Activated naive CD4-positive, alpha-beta T cell treated with anti-CD3 and anti-CD28 coated beads for 36 hours (primary cell): ENCODE measurements at regions of chr15 and their contacts with region 1.

Region 1: GRCh38 chr15:40893733-40894688 is at the start of gene VPS18:
- DNase-seq: peak; percentile 99
- H3K4me3 Mint-ChIP-seq: peak within 1 kb of the TSS; percentile 97
- H3K27ac Mint-ChIP-seq: peak within 1 kb of the TSS; percentile 79
- H3K4me1 Mint-ChIP-seq: peaks cover 28% of the 10 kb centered on the region
- H3K27me3 Mint-ChIP-seq: no peaks in the 10 kb centered on the region
- total RNA-seq, gene VPS18: 3.3 to 3.4 TPM

Region 2: GRCh38 chr15:40513609-40514008 is 380.4 kb before region 1 on chr15:
- CTCF ChIA-PET with region 1: no interaction called
- intact Hi-C with region 1: loop called (anchors 2 kb)
- DNase-seq: no peak
- H3K4me3 Mint-ChIP-seq: no peak overlapping the region
- H3K27ac Mint-ChIP-seq: no peak overlapping the region
- H3K4me1 Mint-ChIP-seq: peaks cover 7% of the 10 kb centered on the region
- H3K27me3 Mint-ChIP-seq: peaks cover 38% of the 10 kb centered on the region

Region 3: GRCh38 chr15:40684381-40684780 is 209.6 kb before region 1 on chr15:
- CTCF ChIA-PET with region 1: interaction called, 3 read pairs
- intact Hi-C with region 1: loop called (anchors 1 kb)
- DNase-seq: no peak
- H3K4me3 Mint-ChIP-seq: no peak overlapping the region
- H3K27ac Mint-ChIP-seq: no peak overlapping the region
- H3K4me1 Mint-ChIP-seq: no peaks in the 10 kb centered on the region
- H3K27me3 Mint-ChIP-seq: no peaks in the 10 kb centered on the region

Region 4: DNA sequence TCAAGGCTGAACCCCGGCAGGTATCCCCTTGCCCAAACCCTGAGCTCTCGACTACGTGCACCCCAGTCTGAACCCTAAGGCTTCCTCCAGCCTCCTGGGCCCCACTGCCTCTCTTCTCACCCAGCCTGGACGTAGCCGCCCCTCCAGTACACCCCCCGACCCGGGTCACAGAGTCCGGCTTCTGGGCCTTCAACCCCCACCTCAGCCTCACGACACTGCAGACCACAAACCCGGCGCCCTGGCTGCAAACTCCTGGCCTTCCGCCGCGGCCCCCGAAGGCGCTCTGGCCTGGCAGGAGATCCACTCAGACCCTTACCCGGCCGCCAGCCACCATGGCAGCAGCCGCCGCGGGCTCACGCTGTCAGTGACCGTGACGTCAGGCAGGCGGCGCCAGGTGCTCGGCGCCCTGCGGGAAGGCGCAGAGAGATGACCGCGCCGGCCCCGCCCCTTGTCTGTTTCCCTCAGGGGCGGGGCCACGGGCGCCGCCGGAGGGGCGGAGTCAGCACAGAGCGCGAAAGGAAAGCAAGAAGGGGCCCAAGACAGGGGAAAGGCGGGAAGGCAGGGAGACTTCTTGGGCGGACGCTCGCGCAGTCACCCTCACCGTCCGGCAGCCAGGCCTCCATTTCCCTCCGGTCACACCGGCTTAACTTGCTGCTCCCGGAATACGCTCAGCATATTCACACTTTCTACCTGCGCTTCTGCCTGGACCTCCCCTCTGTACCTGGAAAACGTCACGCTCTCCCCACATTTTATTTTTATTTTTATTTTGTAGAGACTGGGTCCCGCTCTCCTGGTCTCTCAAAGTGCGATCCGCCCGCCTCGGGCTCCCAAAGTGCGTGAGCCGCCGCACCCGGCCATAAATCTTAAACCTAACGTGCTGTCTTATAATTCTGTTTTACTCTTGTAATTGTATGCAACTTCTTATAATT is 138.9 kb before region 1 on chr15 and contains the start of gene RMDN3:
- CTCF ChIA-PET with region 1: interaction called, 4 read pairs
- intact Hi-C with region 1: loop called (anchors 1 kb)
- DNase-seq: peak; percentile 95
- H3K4me3 Mint-ChIP-seq: peak within 1 kb of the TSS; percentile 94
- H3K27ac Mint-ChIP-seq: peak within 1 kb of the TSS; percentile 98
- H3K4me1 Mint-ChIP-seq: peaks cover 25% of the 10 kb centered on the region
- H3K27me3 Mint-ChIP-seq: no peaks in the 10 kb centered on the region
- total RNA-seq, gene RMDN3: 17.8 to 19.2 TPM

Region 5: GRCh38 chr15:40857601-40858341 is 36.2 kb before region 1 on chr15:
- CTCF ChIA-PET with region 1: interaction called, 393 read pairs
- intact Hi-C with region 1: loop called (anchors 1 kb)
- DNase-seq: peak; percentile 85
- H3K4me3 Mint-ChIP-seq: no peak overlapping the region
- H3K27ac Mint-ChIP-seq: no peak overlapping the region
- H3K4me1 Mint-ChIP-seq: peaks cover 11% of the 10 kb centered on the region
- H3K27me3 Mint-ChIP-seq: no peaks in the 10 kb centered on the region

Region 6: GRCh38 chr15:40941528-40942336 is 47.7 kb after region 1 on chr15:
- CTCF ChIA-PET with region 1: interaction called, 10 read pairs
- intact Hi-C with region 1: no loop called
- DNase-seq: peak; percentile 80
- H3K4me3 Mint-ChIP-seq: peak overlapping the region; percentile 82
- H3K27ac Mint-ChIP-seq: peak overlapping the region; percentile 78
- H3K4me1 Mint-ChIP-seq: peaks cover 32% of the 10 kb centered on the region
- H3K27me3 Mint-ChIP-seq: no peaks in the 10 kb centered on the region

Region 7: DNA sequence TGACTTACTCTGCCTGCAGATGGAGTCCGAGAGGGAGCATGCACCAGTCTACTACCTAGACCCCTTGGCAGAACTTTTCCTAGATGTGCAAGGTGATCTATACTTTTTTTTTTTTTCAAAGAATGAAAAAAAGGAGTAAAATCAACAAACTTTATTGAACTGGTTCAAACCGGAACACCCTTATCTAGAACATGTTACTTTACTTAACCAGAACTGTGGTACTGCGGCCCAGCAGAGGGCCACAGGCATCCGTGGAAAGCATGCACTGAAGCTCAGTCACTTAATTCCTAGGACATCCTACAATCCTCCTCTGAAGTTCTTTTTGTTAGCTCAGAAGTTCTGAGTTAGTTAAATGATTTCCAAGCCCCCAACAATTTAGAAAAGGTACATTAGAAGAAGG is 80.9 kb after region 1 on chr15:
- CTCF ChIA-PET with region 1: no interaction called
- intact Hi-C with region 1: no loop called
- DNase-seq: no peak
- H3K4me3 Mint-ChIP-seq: no peak overlapping the region
- H3K27ac Mint-ChIP-seq: no peak overlapping the region
- H3K4me1 Mint-ChIP-seq: no peaks in the 10 kb centered on the region
- H3K27me3 Mint-ChIP-seq: no peaks in the 10 kb centered on the region